MCF 10A (cell line): ENCODE measurements at regions of chr11 and their contacts with region 1.

Region 1: DNA sequence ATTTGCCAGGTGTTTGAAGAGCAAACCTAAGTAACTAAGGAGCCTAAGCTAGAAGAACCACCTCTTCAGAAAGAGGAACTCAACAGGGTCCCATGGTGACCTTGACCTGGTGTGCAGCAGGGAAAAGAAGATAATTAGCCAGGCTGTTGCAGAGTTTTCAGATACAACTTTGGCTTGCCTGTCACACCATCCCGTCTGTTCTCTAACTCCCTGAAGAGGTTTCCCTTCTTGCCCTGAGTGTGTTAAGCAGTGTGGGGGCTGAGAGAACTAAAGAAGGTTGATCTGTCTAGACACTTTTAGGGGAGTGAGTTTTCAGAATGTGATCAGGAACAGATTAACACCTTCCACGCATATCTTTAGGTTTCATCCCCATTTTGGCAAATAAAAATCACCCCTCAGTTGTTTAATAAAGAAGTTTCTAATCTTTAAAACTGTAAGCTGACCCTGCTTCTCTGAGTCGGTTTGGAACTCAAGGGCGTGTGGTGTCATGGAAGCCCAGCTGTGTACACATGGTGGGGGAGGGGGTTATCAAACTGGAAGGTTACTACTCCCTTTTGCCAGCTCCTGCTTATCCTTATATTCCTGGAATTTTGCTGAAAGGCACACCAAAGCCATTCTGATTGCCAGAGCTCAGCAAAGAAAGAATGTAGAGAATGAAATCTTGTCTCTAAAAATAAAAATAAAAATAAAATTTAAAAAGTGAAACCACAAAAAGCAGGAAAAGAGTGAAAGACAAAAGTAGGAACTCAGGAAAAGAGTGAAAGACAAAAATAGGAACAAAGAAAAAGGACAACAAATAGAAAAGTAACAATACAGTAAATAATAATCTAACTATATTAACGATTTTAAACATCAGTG is 70.2 kb downstream of the DBX1 start:
- DNase-seq: no peak
- H3K4me3 Mint-ChIP-seq: no peak overlapping the region
- H3K27ac Mint-ChIP-seq: peak overlapping the region; percentile 39
- H3K4me1 Mint-ChIP-seq: peaks cover 9% of the 10 kb centered on the region
- H3K27me3 Mint-ChIP-seq: no peaks in the 10 kb centered on the region
- CTCF ChIP-seq: no peak

Region 2: DNA sequence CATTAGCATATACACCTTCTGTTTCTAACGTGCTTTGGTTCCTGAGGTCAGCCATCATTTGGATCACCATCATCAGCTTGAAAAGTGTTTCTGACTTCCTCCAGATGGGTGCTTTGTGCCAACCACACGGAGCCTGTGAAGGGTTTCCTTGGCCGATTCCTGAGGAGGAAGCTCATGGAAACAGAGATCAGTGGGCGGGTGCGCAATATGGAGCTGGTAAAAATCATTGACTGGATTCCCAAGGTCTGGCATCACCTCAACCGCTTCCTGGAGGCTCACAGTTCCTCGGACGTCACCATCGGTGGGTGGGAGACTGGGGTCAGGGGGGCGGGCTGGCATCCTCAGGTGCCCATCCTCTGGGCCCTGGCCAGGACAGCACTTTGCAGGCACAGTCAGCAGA is 15.4 kb after region 1 on chr11:
- CTCF ChIA-PET with region 1: interaction called, 11 read pairs
- POLR2A ChIA-PET with region 1: interaction called, 8 read pairs
- intact Hi-C with region 1: no loop called
- DNase-seq: no peak
- H3K4me3 Mint-ChIP-seq: no peak overlapping the region
- H3K27ac Mint-ChIP-seq: no peak overlapping the region
- H3K4me1 Mint-ChIP-seq: peaks cover 15% of the 10 kb centered on the region
- H3K27me3 Mint-ChIP-seq: no peaks in the 10 kb centered on the region
- CTCF ChIP-seq: no peak

Region 3: GRCh38 chr11:20207781-20208621 is 118.0 kb after region 1 on chr11:
- CTCF ChIA-PET with region 1: no interaction called
- POLR2A ChIA-PET with region 1: no interaction called
- intact Hi-C with region 1: no loop called
- DNase-seq: no peak
- H3K4me3 Mint-ChIP-seq: no peak overlapping the region
- H3K27ac Mint-ChIP-seq: no peak overlapping the region
- H3K4me1 Mint-ChIP-seq: peaks cover 6% of the 10 kb centered on the region
- H3K27me3 Mint-ChIP-seq: peaks cover 61% of the 10 kb centered on the region
- CTCF ChIP-seq: no peak